AG04450 (cell line): ENCODE measurements at regions of chr14 and their contacts with region 1.

Region 1: DNA sequence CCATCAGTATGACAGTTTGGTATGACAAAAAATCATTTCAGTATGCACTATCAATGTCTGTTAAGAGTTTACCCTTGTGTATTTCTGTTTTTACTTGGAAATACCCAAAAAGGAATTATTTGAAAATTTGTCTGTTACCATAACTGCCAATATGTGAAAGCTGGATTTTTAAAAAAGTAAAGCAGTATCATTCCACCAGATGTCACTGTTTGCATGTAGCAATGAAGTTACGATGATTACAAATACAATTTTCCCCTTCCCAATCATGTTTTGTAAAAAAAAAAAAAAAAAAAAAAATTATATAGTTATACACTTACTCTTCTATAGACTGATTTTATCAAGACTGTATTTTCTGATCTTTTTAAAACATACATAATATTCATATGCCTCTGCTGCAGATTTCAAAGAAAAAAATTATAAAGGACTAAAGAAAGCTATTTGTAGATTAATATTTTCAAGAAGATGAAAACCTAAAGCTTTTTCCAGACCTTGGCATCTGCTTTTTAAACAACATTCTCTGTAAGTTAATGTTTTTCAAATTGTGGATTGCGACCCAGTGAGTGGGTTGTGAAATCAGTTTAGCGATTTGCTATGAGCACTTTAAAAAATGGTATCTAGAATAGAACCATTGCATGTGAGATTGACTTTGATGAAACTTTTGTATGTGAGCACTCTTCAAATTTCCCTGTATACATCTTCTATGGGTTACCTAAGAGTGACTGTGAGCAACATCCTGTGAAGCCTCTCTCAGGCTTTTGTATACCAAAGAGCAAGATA is 114.2 kb downstream of the TTC6 start:
- DNase-seq: no peak
- H3K4me3 ChIP-seq: no peak overlapping the region
- H3K27ac ChIP-seq: no peak overlapping the region
- H3K27me3 ChIP-seq: no peaks in the 10 kb centered on the region
- CTCF ChIP-seq: peak; percentile 59

Region 2: DNA sequence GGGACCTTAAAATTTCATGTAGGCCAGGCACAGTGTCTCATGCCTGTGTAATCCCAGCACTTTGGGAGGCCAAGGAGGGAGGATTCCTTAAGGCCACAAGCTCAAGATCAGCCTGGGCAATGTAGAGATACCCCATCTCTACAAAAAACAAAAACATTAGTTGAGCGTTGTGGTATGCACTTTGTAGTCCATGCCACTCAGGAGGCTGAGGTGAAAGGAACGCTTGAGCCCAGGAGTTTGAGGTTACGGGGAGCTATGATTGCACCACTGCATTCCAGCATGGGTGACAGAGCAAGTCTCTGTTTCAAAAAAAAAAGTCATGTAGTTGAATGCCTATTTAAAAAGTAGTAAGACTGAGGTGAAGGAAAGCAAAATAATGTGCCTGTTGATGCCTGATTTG is 30.7 kb before region 1 on chr14:
- CTCF ChIA-PET with region 1: no interaction called
- POLR2A ChIA-PET with region 1: no interaction called
- DNase-seq: no peak
- H3K4me3 ChIP-seq: no peak overlapping the region
- H3K27ac ChIP-seq: no peak overlapping the region
- H3K27me3 ChIP-seq: no peaks in the 10 kb centered on the region
- CTCF ChIP-seq: no peak

Region 3: GRCh38 chr14:37698840-37699777 is 10.5 kb before region 1 on chr14:
- CTCF ChIA-PET with region 1: interaction called, 18 read pairs
- POLR2A ChIA-PET with region 1: no interaction called
- DNase-seq: no peak
- H3K4me3 ChIP-seq: no peak overlapping the region
- H3K27ac ChIP-seq: no peak overlapping the region
- H3K27me3 ChIP-seq: no peaks in the 10 kb centered on the region
- CTCF ChIP-seq: no peak

Region 4: DNA sequence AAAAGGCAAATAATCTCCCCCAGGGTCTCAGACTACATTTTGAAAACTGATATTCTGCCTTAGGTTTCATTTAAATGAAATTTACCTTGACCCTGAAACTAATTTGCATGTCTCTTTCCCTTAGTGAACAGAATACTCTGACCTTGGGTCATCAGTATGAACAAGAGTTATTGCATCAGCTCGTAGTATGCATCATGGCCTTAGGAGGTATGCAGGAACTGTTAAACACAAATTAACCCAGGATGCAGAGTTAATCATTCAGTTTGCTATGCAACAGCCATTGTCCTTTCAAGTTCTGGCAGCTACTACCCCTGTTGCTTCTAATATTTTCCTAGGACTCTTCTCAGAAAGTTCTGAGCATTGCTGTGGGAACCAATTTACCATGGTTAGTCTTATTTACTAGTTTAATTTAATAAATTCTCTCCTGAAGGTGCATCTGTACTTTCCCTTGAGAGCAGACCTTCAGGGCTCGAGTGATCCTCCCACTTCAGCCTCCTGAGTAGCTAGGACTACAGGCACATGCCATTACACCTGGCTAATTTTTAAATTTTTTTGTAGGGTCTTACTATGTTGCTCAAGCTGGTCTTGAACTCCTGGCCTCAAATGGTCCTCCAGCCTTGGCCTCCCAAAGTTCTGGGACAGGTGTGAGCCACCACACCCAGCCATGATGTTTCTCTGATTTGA is 12.5 kb after region 1 on chr14:
- CTCF ChIA-PET with region 1: interaction called, 12 read pairs
- POLR2A ChIA-PET with region 1: no interaction called
- DNase-seq: no peak
- H3K4me3 ChIP-seq: no peak overlapping the region
- H3K27ac ChIP-seq: no peak overlapping the region
- H3K27me3 ChIP-seq: no peaks in the 10 kb centered on the region
- CTCF ChIP-seq: no peak